Activated CD8-positive, alpha-beta T cell treated with anti-CD3 and anti-CD28 coated beads, Interleukin-2, amount 10 ng/mL, durations not matched to agents 7 days and 5 days (primary cell): ENCODE measurements at regions of chr11 and their contacts with region 1.

Region 1: GRCh38 chr11:111540114-111540936 is at the start of gene LAYN:
- DNase-seq: peak; percentile 77
- ATAC-seq: peak; percentile 66
- H3K4me3 Mint-ChIP-seq: peak within 1 kb of the TSS; percentile 73
- H3K27ac Mint-ChIP-seq: peak within 1 kb of the TSS; percentile 94
- H3K4me1 Mint-ChIP-seq: peaks cover 64% of the 10 kb centered on the region
- H3K27me3 Mint-ChIP-seq: peaks cover 10% of the 10 kb centered on the region
- total RNA-seq, gene LAYN: 11.1 to 12.8 TPM

Region 2: GRCh38 chr11:111500481-111500880 is 39.8 kb before region 1 on chr11:
- CTCF ChIA-PET with region 1: no interaction called
- POLR2A ChIA-PET with region 1: no interaction called
- DNase-seq: no peak
- ATAC-seq: no peak
- H3K4me3 Mint-ChIP-seq: no peak overlapping the region
- H3K27ac Mint-ChIP-seq: no peak overlapping the region
- H3K4me1 Mint-ChIP-seq: no peaks in the 10 kb centered on the region
- H3K27me3 Mint-ChIP-seq: peaks cover 42% of the 10 kb centered on the region

Region 3: GRCh38 chr11:111518668-111519067 is 21.7 kb before region 1 on chr11:
- CTCF ChIA-PET with region 1: interaction called, 38 read pairs
- POLR2A ChIA-PET with region 1: interaction called, 79 read pairs
- DNase-seq: no peak
- ATAC-seq: no peak
- H3K4me3 Mint-ChIP-seq: no peak overlapping the region
- H3K27ac Mint-ChIP-seq: no peak overlapping the region
- H3K4me1 Mint-ChIP-seq: peaks cover 19% of the 10 kb centered on the region
- H3K27me3 Mint-ChIP-seq: peaks cover 6% of the 10 kb centered on the region

Region 4: GRCh38 chr11:111526501-111526900 is 13.8 kb before region 1 on chr11:
- CTCF ChIA-PET with region 1: interaction called, 16 read pairs
- POLR2A ChIA-PET with region 1: interaction called, 46 read pairs
- DNase-seq: peak; percentile 37
- ATAC-seq: peak; percentile 56
- H3K4me3 Mint-ChIP-seq: no peak overlapping the region
- H3K27ac Mint-ChIP-seq: peak overlapping the region; percentile 41
- H3K4me1 Mint-ChIP-seq: peaks cover 53% of the 10 kb centered on the region
- H3K27me3 Mint-ChIP-seq: no peaks in the 10 kb centered on the region